Right lobe of liver (tissue), 6 donors: ENCODE measurements at regions of chr12 and their contacts with region 1.

Region 1: GRCh38 chr12:105279460-105280056 is 43.6 kb upstream of the APPL2 start:
- DNase-seq: peak in 2 of 3 donors; percentile 24 to 59
- ATAC-seq: peak; percentile 87 to 92 (median 91)
- H3K4me3 ChIP-seq: no peak overlapping the region
- H3K27ac ChIP-seq: no peak overlapping the region
- H3K4me1 ChIP-seq: no peaks in the 10 kb centered on the region
- H3K27me3 ChIP-seq: no peaks in the 10 kb centered on the region
- CTCF ChIP-seq: peak; percentile 71 to 86 (median 74)
- POLR2A ChIP-seq: no peak

Region 2: DNA sequence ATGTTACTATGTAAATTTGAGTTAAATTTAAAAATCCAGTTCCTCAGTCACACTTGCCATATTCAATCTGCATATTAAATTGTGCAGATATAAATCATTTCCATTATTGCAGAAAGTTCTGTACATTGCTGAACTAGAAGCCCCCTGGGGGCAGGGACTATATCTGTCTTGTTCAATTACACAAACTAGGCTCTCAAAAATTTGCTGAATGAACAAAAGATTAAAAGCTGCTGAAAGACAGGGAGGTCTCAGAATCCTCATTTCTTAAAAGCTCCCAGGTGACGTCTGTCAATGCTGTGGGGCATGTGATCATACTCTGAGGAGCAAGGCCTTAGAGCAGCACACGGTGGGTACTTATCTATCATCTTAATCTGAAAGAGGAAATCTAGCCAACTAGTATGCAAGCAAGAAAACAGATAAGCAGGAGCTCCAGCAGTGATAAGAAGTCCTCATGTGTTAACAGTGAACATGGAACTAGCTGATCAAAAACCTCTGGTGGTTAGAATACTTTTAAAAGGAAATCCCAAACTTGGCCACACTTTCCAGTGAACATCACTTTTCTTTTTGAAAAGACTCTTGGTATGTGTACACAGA is 104.1 kb before region 1 on chr12:
- intact Hi-C with region 1: no loop called
- DNase-seq: no peak
- ATAC-seq: no peak
- H3K4me3 ChIP-seq: no peak overlapping the region
- H3K27ac ChIP-seq: no peak overlapping the region
- H3K4me1 ChIP-seq: peaks cover 0 to 8% (median 0%) of the 10 kb centered on the region in 4 donors
- H3K27me3 ChIP-seq: no peaks in the 10 kb centered on the region
- CTCF ChIP-seq: no peak
- POLR2A ChIP-seq: no peak

Region 3: DNA sequence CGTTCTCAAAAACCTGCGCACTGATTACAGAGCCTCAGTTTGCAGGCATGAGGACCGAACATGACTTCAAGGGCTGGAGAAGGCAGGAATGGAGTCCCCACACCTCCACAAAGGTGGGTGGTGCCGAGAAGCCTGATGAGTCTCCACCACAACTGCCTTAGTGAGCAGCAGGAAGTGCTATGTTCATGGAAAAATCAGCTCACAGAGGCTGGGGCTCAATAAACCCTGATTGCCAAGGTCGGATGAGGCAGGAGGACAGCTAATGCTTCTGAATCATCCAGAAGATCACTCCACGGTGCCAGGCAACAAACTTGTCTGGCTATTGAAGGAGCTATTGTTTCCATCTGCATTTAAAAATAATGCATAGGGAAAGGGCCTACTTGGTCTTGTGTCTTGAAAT is 74.6 kb before region 1 on chr12:
- intact Hi-C with region 1: no loop called
- DNase-seq: no peak
- ATAC-seq: no peak
- H3K4me3 ChIP-seq: no peak overlapping the region
- H3K27ac ChIP-seq: no peak overlapping the region
- H3K4me1 ChIP-seq: peaks cover 0 to 12% (median 5%) of the 10 kb centered on the region in 4 donors
- H3K27me3 ChIP-seq: no peaks in the 10 kb centered on the region
- CTCF ChIP-seq: no peak
- POLR2A ChIP-seq: no peak

Region 4: GRCh38 chr12:105382771-105383622 is 103.4 kb after region 1 on chr12:
- intact Hi-C with region 1: loop called (anchors 10 kb)
- DNase-seq: no peak
- ATAC-seq: peak; percentile 88 to 94 (median 91)
- H3K4me3 ChIP-seq: peak overlapping the region in 2 of 3 donors; percentile 17 to 27
- H3K27ac ChIP-seq: no peak overlapping the region
- H3K4me1 ChIP-seq: no peaks in the 10 kb centered on the region
- H3K27me3 ChIP-seq: no peaks in the 10 kb centered on the region
- CTCF ChIP-seq: peak; percentile 76 to 90 (median 80)
- POLR2A ChIP-seq: no peak